WTC11 (cell line): ENCODE measurements at regions of chr16 and their contacts with region 1.

Region 1: DNA sequence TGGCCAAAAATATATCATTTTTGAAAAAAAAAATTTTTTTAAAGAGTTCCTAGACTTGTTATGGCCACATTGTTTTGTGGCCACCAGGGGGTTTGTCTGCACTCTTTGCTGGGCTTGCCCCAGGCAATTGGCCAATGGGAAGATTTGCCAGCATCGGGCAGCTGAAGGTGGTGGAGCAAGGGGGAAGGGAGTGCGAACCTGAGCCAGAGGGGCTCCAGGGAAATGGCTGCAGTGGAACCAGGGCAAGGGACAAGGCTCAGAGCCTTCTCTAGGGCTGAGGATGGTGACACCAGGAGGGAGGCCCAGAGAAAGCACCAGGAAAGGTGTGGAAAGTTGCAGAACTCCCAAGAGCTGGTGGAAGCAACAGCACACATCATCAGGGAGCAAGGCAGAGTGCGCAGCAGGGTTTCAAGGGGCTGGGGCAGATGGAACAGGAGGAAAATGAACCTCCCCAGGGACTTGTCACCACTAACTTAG is 15.5 kb upstream of the CMIP start:
- DNase-seq: peak; percentile 63
- ATAC-seq: peak; percentile 94
- H3K4me3 Mint-ChIP-seq: no peak overlapping the region
- H3K27ac Mint-ChIP-seq: 0 out of 2 replicates have a peak overlapping the region, but pooled peaks have one; percentile 64
- H3K4me1 Mint-ChIP-seq: peaks cover 17% of the 10 kb centered on the region
- H3K27me3 Mint-ChIP-seq: no peaks in the 10 kb centered on the region; the same call in 1 of the 2 replicates
- CTCF ChIP-seq: peak; percentile 28; the same call in 1 of the 2 replicates

Region 2: DNA sequence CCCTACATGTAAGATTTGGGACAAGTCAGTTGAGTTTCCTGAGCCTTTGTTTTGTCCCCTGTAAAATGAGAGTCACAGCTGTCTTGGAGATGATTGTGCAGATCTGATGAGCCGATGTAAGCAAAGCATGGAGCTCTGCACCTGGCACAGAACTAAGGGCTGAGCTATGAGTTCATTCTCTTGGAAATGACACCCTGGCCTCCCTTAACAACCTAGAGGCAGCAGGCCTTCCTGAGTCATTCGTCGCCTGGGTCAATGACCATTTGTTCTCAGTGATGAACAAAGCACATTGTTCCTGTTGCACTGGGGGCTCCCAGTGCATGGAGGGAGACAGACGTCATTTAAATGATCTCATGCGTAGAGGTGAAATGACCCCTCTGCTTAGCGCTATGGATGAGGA is 270.1 kb before region 1 on chr16:
- CTCF ChIA-PET with region 1: no interaction called
- POLR2A ChIA-PET with region 1: no interaction called
- DNase-seq: no peak
- ATAC-seq: no peak
- H3K4me3 Mint-ChIP-seq: no peak overlapping the region
- H3K27ac Mint-ChIP-seq: no peak overlapping the region
- H3K4me1 Mint-ChIP-seq: no peaks in the 10 kb centered on the region
- H3K27me3 Mint-ChIP-seq: no peaks in the 10 kb centered on the region
- CTCF ChIP-seq: no peak

Region 3: DNA sequence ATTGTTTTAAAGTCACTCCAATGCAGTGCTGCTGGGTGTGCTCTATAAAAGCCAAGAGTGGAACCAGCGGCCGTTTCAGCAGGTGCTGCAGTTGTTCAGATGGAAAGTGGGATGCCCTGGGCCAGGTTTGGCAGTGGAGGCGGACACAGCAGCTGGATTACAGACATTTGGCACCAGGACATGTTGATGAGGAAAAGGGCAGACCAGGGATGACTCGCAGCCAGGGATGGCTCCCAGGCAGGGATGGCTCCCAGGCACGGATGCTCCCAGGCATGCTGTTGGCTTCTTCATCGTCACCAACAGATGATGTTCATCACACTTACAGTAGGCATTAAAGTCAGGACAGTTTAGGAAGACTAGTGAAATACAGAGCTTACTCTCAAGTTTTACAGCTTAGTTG is 104.3 kb before region 1 on chr16:
- CTCF ChIA-PET with region 1: no interaction called
- POLR2A ChIA-PET with region 1: no interaction called
- DNase-seq: no peak
- ATAC-seq: no peak
- H3K4me3 Mint-ChIP-seq: no peak overlapping the region
- H3K27ac Mint-ChIP-seq: no peak overlapping the region
- H3K4me1 Mint-ChIP-seq: peaks cover 3% of the 10 kb centered on the region; the same call in 1 of the 2 replicates
- H3K27me3 Mint-ChIP-seq: no peaks in the 10 kb centered on the region
- CTCF ChIP-seq: no peak

Region 4: GRCh38 chr16:81415751-81416150 is 13.3 kb before region 1 on chr16:
- CTCF ChIA-PET with region 1: interaction called, 13 read pairs
- POLR2A ChIA-PET with region 1: no interaction called
- DNase-seq: peak; percentile 67
- ATAC-seq: peak; percentile 82
- H3K4me3 Mint-ChIP-seq: no peak overlapping the region; the same call in 1 of the 2 replicates
- H3K27ac Mint-ChIP-seq: no peak overlapping the region; the same call in 1 of the 2 replicates
- H3K4me1 Mint-ChIP-seq: peaks cover 24% of the 10 kb centered on the region
- H3K27me3 Mint-ChIP-seq: no peaks in the 10 kb centered on the region
- CTCF ChIP-seq: no peak